HepG2 (cell line): ENCODE measurements at regions of chr17 and their contacts with region 1.

Region 1: DNA sequence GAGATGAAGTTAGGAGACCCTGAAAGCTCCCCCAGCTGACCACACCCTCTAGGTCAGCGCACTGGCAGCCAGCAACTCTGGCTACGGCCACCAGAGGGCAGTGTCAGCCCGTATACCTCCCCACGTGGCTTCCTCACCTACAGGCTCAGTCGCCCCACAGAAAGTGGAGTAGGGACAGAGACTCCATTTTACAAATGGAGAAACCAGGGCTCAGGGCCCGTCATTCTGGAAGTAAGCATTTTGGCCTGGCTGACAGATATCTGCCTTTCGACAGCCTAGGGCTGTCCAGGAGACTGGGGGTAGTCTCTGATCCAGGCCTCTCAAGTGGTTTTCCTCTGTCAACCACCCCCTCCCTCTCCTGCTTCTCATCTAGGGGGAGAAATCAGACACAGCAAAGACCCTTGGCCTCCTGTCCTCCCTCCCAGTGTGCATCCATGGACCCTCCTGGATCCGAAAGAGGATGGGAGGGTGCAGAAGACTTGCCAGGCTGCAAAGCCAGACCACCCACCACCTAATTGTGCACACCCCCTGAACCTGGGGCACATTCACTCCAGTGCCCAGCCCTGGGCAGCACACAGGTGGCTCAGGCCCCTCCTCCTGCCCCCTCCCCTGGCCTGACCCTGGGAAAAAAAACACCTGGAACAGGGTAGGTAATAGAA is 3.8 kb upstream of the HAP1 start:
- DNase-seq: peak; percentile 78
- ATAC-seq: peak; percentile 79
- H3K4me3 ChIP-seq: peak overlapping the region in 1 of 3 experiments; percentile 23; a peak in 2 of 6 replicates
- H3K27ac ChIP-seq: no peak overlapping the region
- H3K4me1 ChIP-seq: peaks cover 38% of the 10 kb centered on the region
- H3K27me3 ChIP-seq: peaks cover 18 to 59% of the 10 kb centered on the region in 2 experiments
- CTCF ChIP-seq: peak; percentile 99
- EP300 ChIP-seq: no peak
- POLR2A ChIP-seq: no peak
- RAD21 ChIP-seq: peak; percentile 100

Region 2: GRCh38 chr17:41648411-41649195 is 89.6 kb before region 1 on chr17:
- CTCF ChIA-PET with region 1: no interaction called
- POLR2A ChIA-PET with region 1: no interaction called
- in situ Hi-C with region 1: no loop called
- intact Hi-C with region 1: no loop called
- DNase-seq: peak; percentile 75
- ATAC-seq: peak; percentile 89
- H3K4me3 ChIP-seq: peak overlapping the region; percentile 4 to 66 (median 37); a peak in 3 of 6 replicates
- H3K27ac ChIP-seq: no peak overlapping the region
- H3K4me1 ChIP-seq: peaks cover 33% of the 10 kb centered on the region
- H3K27me3 ChIP-seq: peaks cover 5 to 20% of the 10 kb centered on the region in 2 experiments; a peak in 3 of 5 replicates
- CTCF ChIP-seq: peak; percentile 98
- EP300 ChIP-seq: no peak
- POLR2A ChIP-seq: no peak
- RAD21 ChIP-seq: peak; percentile 83

Region 3: GRCh38 chr17:41885733-41886132 is 147.5 kb after region 1 on chr17:
- CTCF ChIA-PET with region 1: interaction called, 15 read pairs
- POLR2A ChIA-PET with region 1: no interaction called
- in situ Hi-C with region 1: no loop called
- intact Hi-C with region 1: no loop called
- DNase-seq: no peak
- ATAC-seq: peak; percentile 39
- H3K4me3 ChIP-seq: no peak overlapping the region
- H3K27ac ChIP-seq: no peak overlapping the region
- H3K4me1 ChIP-seq: peaks cover 10% of the 10 kb centered on the region; the same call in 1 of the 2 replicates
- H3K27me3 ChIP-seq: no peaks in the 10 kb centered on the region
- CTCF ChIP-seq: peak; percentile 69
- EP300 ChIP-seq: no peak
- POLR2A ChIP-seq: no peak
- RAD21 ChIP-seq: 0 out of 2 replicates have a peak, but pooled peaks have one; percentile 49